PC-9 (cell line): ENCODE measurements at regions of chr10 and their contacts with region 1.

Region 1: GRCh38 chr10:85557077-85557476 is 809.5 kb downstream of the GRID1 start:
- DNase-seq: no peak
- H3K4me3 ChIP-seq: no peak overlapping the region
- H3K27ac ChIP-seq: no peak overlapping the region
- H3K4me1 ChIP-seq: no peaks in the 10 kb centered on the region
- H3K27me3 ChIP-seq: no peaks in the 10 kb centered on the region
- CTCF ChIP-seq: no peak

Region 2: DNA sequence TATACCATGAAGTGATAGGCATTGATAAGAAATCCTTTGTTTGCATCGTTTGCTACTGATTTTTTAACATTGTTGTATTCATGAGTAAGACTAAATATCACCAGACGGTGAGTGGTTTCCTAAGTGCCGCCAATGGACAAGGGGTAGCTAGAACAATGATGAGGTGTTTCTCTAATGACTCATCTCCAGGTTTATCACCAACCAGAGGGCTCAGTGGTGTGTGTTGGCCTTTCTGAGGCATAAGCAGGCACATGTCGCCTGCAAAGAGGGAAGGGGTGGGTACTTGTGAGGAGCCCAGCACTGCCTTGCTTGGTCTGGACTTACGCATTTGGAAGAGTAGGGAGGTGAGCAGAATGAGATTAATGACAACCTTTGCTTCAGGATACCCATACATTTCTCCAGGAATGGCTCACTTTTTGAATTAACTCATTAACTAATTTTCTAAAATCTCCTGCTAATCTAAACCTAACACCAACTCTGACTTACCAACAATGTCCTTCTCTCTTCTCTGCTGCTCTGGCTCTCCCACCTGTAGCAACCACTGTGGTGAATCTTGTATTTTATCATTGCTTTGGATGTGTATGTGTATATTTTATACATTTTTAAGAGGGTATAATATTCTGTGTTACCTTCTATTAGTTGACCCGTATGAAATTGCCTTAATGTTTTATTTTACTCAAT is 86.9 kb after region 1 on chr10:
- CTCF ChIA-PET with region 1: no interaction called
- POLR2A ChIA-PET with region 1: interaction called, 10 read pairs
- intact Hi-C with region 1: no loop called
- DNase-seq: peak; percentile 39 to 83
- H3K4me3 ChIP-seq: no peak overlapping the region
- H3K27ac ChIP-seq: peak overlapping the region; percentile 99
- H3K4me1 ChIP-seq: peaks cover 47% of the 10 kb centered on the region
- H3K27me3 ChIP-seq: no peaks in the 10 kb centered on the region
- CTCF ChIP-seq: no peak

Region 3: GRCh38 chr10:86127274-86127819 is 570.3 kb after region 1 on chr10:
- CTCF ChIA-PET with region 1: no interaction called
- POLR2A ChIA-PET with region 1: no interaction called
- intact Hi-C with region 1: no loop called
- DNase-seq: no peak
- H3K4me3 ChIP-seq: no peak overlapping the region
- H3K27ac ChIP-seq: no peak overlapping the region
- H3K4me1 ChIP-seq: no peaks in the 10 kb centered on the region
- H3K27me3 ChIP-seq: peaks cover 15% of the 10 kb centered on the region
- CTCF ChIP-seq: no peak

Region 4: GRCh38 chr10:86461963-86462804 is 905.1 kb after region 1 on chr10:
- CTCF ChIA-PET with region 1: no interaction called
- POLR2A ChIA-PET with region 1: no interaction called
- intact Hi-C with region 1: no loop called
- DNase-seq: no peak
- H3K4me3 ChIP-seq: no peak overlapping the region
- H3K27ac ChIP-seq: no peak overlapping the region
- H3K4me1 ChIP-seq: no peaks in the 10 kb centered on the region
- H3K27me3 ChIP-seq: no peaks in the 10 kb centered on the region
- CTCF ChIP-seq: no peak